ENCODE measurements at regions of chr10 and their contacts with region 1.

Region 1: DNA sequence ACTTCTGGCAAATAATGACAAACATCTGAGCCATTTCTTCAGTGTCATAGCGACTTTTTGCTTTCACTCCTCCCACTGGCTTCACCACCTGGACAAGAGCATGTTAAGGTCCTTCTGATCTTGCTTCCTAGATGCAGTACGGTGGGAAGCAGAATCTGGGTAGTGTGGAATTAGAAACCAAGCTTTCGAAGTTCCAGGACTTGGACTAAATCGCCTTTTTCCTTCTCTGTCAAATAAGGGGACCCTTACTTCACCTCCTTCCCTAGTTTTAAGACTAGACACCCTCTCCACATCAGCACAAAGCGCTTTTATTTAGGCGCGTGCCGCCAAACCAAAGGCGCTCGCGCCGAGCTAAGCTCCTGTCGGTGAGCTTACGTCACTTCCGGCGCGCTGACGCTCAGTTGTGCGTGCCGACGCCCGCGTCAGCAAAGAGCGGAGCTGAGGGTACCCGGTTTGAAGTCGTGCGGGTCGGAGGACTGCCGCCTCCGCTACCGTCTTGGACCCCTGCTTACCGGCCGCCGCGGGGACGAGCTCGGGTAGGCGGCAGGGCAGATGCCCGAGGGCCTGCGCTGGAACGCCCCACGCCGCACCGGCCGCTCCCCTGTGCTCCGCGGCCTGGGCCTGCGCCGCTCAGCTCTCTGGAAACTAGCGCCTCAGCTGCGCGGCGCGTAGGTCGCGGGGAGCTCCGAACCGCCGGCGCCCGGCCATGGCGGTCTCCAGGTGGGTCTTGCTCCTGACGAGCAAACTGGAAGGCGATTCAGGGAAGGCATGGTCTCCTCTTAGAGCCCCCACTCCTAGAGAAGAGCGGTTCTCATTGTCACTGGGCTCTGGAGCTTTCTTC is at the start of gene BTAF1:
- DNase-seq: peak; percentile 52 to 94
- H3K4me3 ChIP-seq: peak within 1 kb of the TSS; percentile 89 to 97
- H3K27ac ChIP-seq: peak within 1 kb of the TSS; percentile 94 to 98
- H3K4me1 ChIP-seq: peaks cover 2 to 10% of the 10 kb centered on the region in 2 donors
- H3K27me3 ChIP-seq: no peaks in the 10 kb centered on the region
- CTCF ChIP-seq: no peak
- total RNA-seq, gene BTAF1: 19.9 TPM

Region 2: GRCh38 chr10:91887272-91888076 is 36.1 kb before region 1 on chr10:
- intact Hi-C with region 1: loop called (anchors 5 kb)
- DNase-seq: peak in 1 of 2 donors; percentile 73
- H3K4me3 ChIP-seq: peak overlapping the region; percentile 66 to 78
- H3K27ac ChIP-seq: peak overlapping the region; percentile 28 to 76
- H3K4me1 ChIP-seq: peaks cover 3 to 20% of the 10 kb centered on the region in 2 donors
- H3K27me3 ChIP-seq: no peaks in the 10 kb centered on the region
- CTCF ChIP-seq: no peak

Region 3: GRCh38 chr10:92074126-92074887 is 150.7 kb after region 1 on chr10:
- intact Hi-C with region 1: no loop called
- DNase-seq: no peak
- H3K4me3 ChIP-seq: no peak overlapping the region
- H3K27ac ChIP-seq: no peak overlapping the region
- H3K4me1 ChIP-seq: no peaks in the 10 kb centered on the region
- H3K27me3 ChIP-seq: no peaks in the 10 kb centered on the region
- CTCF ChIP-seq: peak in 1 of 3 experiments; percentile 19

Measured in ascending aorta (tissue), 2 donors.